Adrenal gland (tissue), 19 donors: ENCODE measurements at regions of chr5 and their contacts with region 1.

Region 1: GRCh38 chr5:147576646-147577535 is 67.0 kb upstream of the DPYSL3 start:
- DNase-seq: peak; percentile 28 to 76 (median 66)
- H3K4me3 ChIP-seq: no peak overlapping the region
- H3K27ac ChIP-seq: no peak overlapping the region
- H3K4me1 ChIP-seq: no peaks in the 10 kb centered on the region
- H3K27me3 ChIP-seq: no peaks in the 10 kb centered on the region
- CTCF ChIP-seq: peak; percentile 61 to 89 (median 72)
- POLR2A ChIP-seq: no peak

Region 2: GRCh38 chr5:147223948-147224791 is 352.7 kb before region 1 on chr5:
- intact Hi-C with region 1: loop called in 1 of 2 experiments (anchors 10 kb)
- DNase-seq: peak; percentile 42 to 72 (median 62)
- H3K4me3 ChIP-seq: no peak overlapping the region
- H3K27ac ChIP-seq: no peak overlapping the region
- H3K4me1 ChIP-seq: no peaks in the 10 kb centered on the region
- H3K27me3 ChIP-seq: no peaks in the 10 kb centered on the region
- CTCF ChIP-seq: peak; percentile 51 to 75 (median 66)
- POLR2A ChIP-seq: no peak

Region 3: GRCh38 chr5:147453875-147454814 is 122.7 kb before region 1 on chr5:
- intact Hi-C with region 1: loop called in 1 of 2 experiments (anchors 5 kb)
- DNase-seq: peak; percentile 78 to 90 (median 86)
- H3K4me3 ChIP-seq: peak overlapping the region in 3 of 4 donors; percentile 44 to 84 (median 56)
- H3K27ac ChIP-seq: peak overlapping the region in 2 of 5 donors; percentile 48 to 68
- H3K4me1 ChIP-seq: peaks cover 11 to 16% of the 10 kb centered on the region in 2 donors
- H3K27me3 ChIP-seq: no peaks in the 10 kb centered on the region
- CTCF ChIP-seq: peak; percentile 80 to 97 (median 89)
- POLR2A ChIP-seq: no peak

Region 4: DNA sequence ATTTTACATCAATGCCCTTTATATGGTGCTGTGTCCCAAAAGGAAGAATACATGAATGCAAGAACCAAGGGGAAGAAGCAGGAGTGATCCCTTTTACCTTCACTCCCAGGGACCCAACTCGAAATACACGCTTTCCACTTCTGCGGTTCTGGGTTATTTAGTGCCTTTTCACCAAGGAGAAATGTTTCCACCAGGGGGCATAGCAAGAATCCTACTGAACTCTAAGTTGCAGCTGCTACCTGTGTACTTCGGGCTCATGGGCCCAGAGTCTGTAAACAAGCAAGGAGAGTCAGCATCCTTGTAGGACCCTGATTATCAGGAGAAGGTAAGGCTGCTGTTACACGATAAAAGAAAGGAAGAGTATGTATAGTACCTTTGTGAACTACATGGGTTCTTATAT is 112.7 kb before region 1 on chr5:
- intact Hi-C with region 1: loop called in 1 of 2 experiments (anchors 5 kb)
- DNase-seq: peak in 3 of 7 donors; percentile 17 to 36 (median 26)
- H3K4me3 ChIP-seq: no peak overlapping the region
- H3K27ac ChIP-seq: no peak overlapping the region
- H3K4me1 ChIP-seq: no peaks in the 10 kb centered on the region
- H3K27me3 ChIP-seq: no peaks in the 10 kb centered on the region
- CTCF ChIP-seq: peak; percentile 27 to 51 (median 46)
- POLR2A ChIP-seq: no peak